ENCODE measurements at regions of chr14 and their contacts with region 1.

Region 1: GRCh38 chr14:22556990-22557623 is 31.9 kb downstream of the DAD1 start:
- DNase-seq: peak; percentile 87 to 96 (median 91)
- H3K4me3 ChIP-seq: peak overlapping the region; percentile 80 to 85
- H3K4me3 Mint-ChIP-seq: peak overlapping the region; percentile 77 to 96 (median 88)
- H3K27ac ChIP-seq: peak overlapping the region; percentile 97
- H3K27ac Mint-ChIP-seq: peak overlapping the region; percentile 98 to 100 (median 100)
- H3K4me1 ChIP-seq: peaks cover 97% of the 10 kb centered on the region
- H3K4me1 Mint-ChIP-seq: peaks cover 75 to 97% (median 86%) of the 10 kb centered on the region in 4 donors
- H3K27me3 ChIP-seq: no peaks in the 10 kb centered on the region
- H3K27me3 Mint-ChIP-seq: peaks cover 2 to 4% of the 10 kb centered on the region in 2 donors

Region 2: DNA sequence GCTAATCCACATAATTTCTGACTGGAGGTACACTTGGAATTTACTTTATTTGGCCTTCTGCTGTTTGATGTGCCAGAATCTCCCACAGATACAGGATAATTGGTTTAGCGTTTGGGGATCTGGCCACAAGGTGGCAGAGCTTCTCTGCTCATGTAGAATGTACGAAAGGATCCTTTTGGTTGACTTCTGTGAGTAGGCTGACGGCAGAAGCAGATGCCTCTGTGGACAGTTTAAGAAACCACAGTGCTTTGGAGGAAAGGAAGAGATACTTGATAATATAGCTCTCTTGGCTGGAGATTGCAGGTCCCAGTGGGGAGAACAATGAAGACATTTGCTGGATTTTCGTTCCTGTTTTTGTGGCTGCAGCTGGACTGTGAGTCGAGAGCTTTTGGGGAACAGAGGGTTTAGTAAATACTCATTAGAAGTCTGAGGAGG is 808.2 kb before region 1 on chr14:
- CTCF ChIA-PET with region 1: no interaction called
- POLR2A ChIA-PET with region 1: interaction called, 11 read pairs
- intact Hi-C with region 1: loop called (anchors 5 kb)
- DNase-seq: peak; percentile 48 to 54 (median 50)
- H3K4me3 ChIP-seq: no peak overlapping the region
- H3K4me3 Mint-ChIP-seq: peak overlapping the region; percentile 18 to 78 (median 62)
- H3K27ac ChIP-seq: no peak overlapping the region
- H3K27ac Mint-ChIP-seq: peak overlapping the region in 6 of 7 donors; percentile 26 to 82 (median 50)
- H3K4me1 ChIP-seq: no peaks in the 10 kb centered on the region
- H3K4me1 Mint-ChIP-seq: peaks cover 6 to 9% (median 8%) of the 10 kb centered on the region in 4 donors
- H3K27me3 ChIP-seq: no peaks in the 10 kb centered on the region
- H3K27me3 Mint-ChIP-seq: peaks cover 12 to 19% of the 10 kb centered on the region in 2 donors

Region 3: DNA sequence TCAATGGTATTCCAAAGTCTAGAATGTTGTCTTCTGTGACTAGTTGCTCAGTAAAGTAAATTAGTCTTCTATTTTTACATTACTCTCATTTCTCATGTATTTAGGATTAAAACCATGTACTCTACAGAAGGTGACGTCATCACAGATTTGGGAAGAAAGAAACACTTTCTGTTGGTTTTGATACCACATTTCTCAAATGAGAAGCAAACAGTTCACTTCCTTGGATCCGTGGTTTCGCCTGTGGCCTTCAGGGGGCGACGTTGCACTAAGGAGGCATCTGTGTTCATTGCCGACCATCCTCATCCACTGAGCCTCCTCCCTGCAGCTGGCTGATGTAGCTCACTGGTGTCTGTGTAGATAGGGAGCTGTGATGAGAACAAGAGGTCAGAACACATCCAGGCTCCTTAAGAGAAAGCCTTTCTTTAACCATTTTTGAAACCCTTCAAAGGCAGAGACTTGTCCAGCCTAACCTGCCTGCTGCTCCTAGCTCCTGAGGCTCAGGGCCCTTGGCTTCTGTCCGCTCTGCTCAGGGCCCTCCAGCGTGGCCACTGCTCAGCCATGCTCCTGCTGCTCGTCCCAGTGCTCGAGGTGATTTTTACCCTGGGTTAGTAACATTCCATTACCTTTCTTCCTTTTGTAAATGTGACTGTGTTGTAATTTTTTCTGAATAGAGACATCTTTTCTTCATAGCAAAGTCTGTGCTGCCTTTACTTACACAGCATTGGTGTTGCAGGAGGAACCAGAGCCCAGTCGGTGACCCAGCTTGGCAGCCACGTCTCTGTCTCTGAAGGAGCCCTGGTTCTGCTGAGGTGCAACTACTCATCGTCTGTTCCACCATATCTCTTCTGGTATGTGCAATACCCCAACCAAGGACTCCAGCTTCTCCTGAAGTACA is 662.9 kb before region 1 on chr14:
- CTCF ChIA-PET with region 1: interaction called, 3 read pairs
- POLR2A ChIA-PET with region 1: interaction called, 10 read pairs
- intact Hi-C with region 1: no loop called
- DNase-seq: peak; percentile 39 to 68 (median 46)
- H3K4me3 ChIP-seq: peak overlapping the region in 1 of 2 donors; percentile 22
- H3K4me3 Mint-ChIP-seq: peak overlapping the region; percentile 72 to 82 (median 76)
- H3K27ac ChIP-seq: no peak overlapping the region
- H3K27ac Mint-ChIP-seq: peak overlapping the region in 6 of 7 donors; percentile 58 to 93 (median 82)
- H3K4me1 ChIP-seq: peaks cover 3% of the 10 kb centered on the region
- H3K4me1 Mint-ChIP-seq: peaks cover 7 to 12% (median 11%) of the 10 kb centered on the region in 4 donors
- H3K27me3 ChIP-seq: no peaks in the 10 kb centered on the region
- H3K27me3 Mint-ChIP-seq: peaks cover 0 to 2% of the 10 kb centered on the region in 2 donors

Region 4: DNA sequence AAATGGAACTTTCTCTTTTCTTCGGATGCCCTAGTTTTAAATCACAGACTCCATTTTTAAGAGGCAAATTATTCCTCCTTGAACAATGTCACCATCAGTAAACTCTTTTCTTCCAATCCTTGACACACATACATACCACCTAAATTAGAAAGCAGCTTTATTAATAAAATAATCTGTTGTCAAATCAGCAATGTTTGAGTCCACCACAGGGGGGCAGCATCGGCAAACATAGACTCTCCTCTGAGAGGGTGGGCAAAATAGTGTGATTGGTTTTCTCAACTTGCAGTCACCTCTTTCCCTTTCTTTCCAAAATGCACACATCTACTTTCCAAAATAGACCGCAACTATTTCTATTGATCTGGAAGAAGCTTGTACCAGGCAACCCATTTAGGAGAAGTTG is 445.1 kb before region 1 on chr14:
- CTCF ChIA-PET with region 1: interaction called, 6 read pairs
- POLR2A ChIA-PET with region 1: interaction called, 11 read pairs
- intact Hi-C with region 1: loop called (anchors 2 kb)
- DNase-seq: peak in 2 of 5 donors; percentile 34 to 38
- H3K4me3 ChIP-seq: no peak overlapping the region
- H3K4me3 Mint-ChIP-seq: peak overlapping the region; percentile 59 to 85 (median 78)
- H3K27ac ChIP-seq: peak overlapping the region; percentile 31
- H3K27ac Mint-ChIP-seq: peak overlapping the region in 4 of 7 donors; percentile 61 to 83 (median 72)
- H3K4me1 ChIP-seq: no peaks in the 10 kb centered on the region
- H3K4me1 Mint-ChIP-seq: peaks cover 0 to 16% (median 4%) of the 10 kb centered on the region in 4 donors
- H3K27me3 ChIP-seq: no peaks in the 10 kb centered on the region
- H3K27me3 Mint-ChIP-seq: no peaks in the 10 kb centered on the region

Region 5: GRCh38 chr14:22386924-22387775 is 170.0 kb before region 1 on chr14:
- CTCF ChIA-PET with region 1: no interaction called
- POLR2A ChIA-PET with region 1: no interaction called
- intact Hi-C with region 1: no loop called
- DNase-seq: no peak
- H3K4me3 ChIP-seq: no peak overlapping the region
- H3K4me3 Mint-ChIP-seq: no peak overlapping the region
- H3K27ac ChIP-seq: no peak overlapping the region
- H3K27ac Mint-ChIP-seq: no peak overlapping the region
- H3K4me1 ChIP-seq: no peaks in the 10 kb centered on the region
- H3K4me1 Mint-ChIP-seq: no peaks in the 10 kb centered on the region
- H3K27me3 ChIP-seq: no peaks in the 10 kb centered on the region
- H3K27me3 Mint-ChIP-seq: no peaks in the 10 kb centered on the region

Region 6: DNA sequence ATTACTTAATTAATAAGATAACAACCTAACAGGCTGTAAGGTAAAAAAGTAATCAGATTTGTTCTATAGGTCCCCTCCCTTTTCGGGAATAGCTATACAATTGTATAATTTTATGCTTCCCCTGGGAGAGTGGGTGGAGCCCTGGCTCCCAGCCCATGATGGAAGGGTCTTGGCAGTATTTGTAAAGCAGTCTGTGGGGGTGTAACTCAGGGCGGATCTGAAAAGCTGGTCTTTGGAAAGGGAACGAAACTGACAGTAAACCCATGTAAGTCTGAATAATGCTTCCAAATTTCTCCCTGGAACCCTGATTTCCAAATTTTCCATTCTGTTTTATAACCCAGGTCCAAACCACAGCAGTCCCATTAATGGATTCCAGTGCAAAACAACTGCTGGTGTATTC is 78.4 kb before region 1 on chr14:
- CTCF ChIA-PET with region 1: interaction called, 3 read pairs
- POLR2A ChIA-PET with region 1: interaction called, 1,528 read pairs
- intact Hi-C with region 1: no loop called
- DNase-seq: no peak
- H3K4me3 ChIP-seq: no peak overlapping the region
- H3K4me3 Mint-ChIP-seq: peak overlapping the region in 7 of 8 donors; percentile 54 to 81 (median 70)
- H3K27ac ChIP-seq: no peak overlapping the region
- H3K27ac Mint-ChIP-seq: no peak overlapping the region
- H3K4me1 ChIP-seq: no peaks in the 10 kb centered on the region
- H3K4me1 Mint-ChIP-seq: no peaks in the 10 kb centered on the region
- H3K27me3 ChIP-seq: no peaks in the 10 kb centered on the region
- H3K27me3 Mint-ChIP-seq: no peaks in the 10 kb centered on the region

Region 7: DNA sequence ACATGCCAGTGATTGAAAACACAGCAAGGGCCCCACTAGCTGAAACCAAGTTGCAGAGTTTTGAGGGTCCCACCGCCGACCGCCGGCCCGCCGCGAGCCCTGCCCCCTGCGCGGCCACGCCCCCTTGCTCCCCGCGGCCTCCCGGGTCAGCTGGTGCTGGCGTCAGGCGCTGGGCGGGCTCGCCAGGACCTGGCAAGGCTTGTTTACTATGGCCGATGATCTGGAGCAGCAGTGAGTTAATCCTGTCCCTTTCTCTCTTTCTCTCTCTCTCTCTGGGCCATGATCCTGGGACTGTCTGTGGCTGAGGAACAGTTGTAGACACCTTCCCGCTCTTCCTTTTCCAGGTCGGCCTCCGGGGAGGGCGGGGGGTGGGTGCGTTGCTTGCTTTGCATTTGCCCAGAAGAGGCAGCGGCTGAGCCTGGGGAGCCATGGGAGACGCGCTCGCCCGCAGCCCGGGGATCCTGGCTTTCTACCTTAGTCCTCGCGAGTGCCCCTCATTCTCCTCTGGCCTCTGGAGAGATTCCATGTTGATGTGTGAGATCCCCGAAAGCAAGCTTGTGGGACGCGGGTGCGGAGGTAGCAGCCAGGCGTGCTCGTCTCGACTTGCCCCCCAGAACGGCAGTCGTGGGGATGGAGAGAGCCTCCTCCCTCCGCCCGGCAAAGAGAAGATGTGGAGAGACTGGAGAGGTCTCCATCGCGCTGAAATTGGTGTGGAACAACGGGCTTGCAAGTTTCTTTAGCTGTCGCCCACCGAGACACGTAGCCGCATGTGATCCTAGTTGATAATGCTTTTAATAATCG is 41.2 kb after region 1 on chr14 and contains the start of gene ABHD4:
- CTCF ChIA-PET with region 1: interaction called, 9 read pairs
- POLR2A ChIA-PET with region 1: interaction called, 24 read pairs
- intact Hi-C with region 1: no loop called
- DNase-seq: peak; percentile 51 to 65 (median 54)
- H3K4me3 ChIP-seq: peak within 1 kb of the TSS; percentile 79 to 84
- H3K4me3 Mint-ChIP-seq: peak within 1 kb of the TSS; percentile 92 to 98 (median 97)
- H3K27ac ChIP-seq: peak within 1 kb of the TSS; percentile 74
- H3K27ac Mint-ChIP-seq: peak within 1 kb of the TSS; percentile 77 to 99 (median 94)
- H3K4me1 ChIP-seq: peaks cover 20% of the 10 kb centered on the region
- H3K4me1 Mint-ChIP-seq: peaks cover 16 to 43% (median 32%) of the 10 kb centered on the region in 4 donors
- H3K27me3 ChIP-seq: no peaks in the 10 kb centered on the region
- H3K27me3 Mint-ChIP-seq: no peaks in the 10 kb centered on the region
- total RNA-seq, gene ABHD4: 18.8 to 22.4 TPM

Measured in CD4-positive, alpha-beta memory T cell (primary cell).